ENCODE measurements at regions of chr6 and their contacts with region 1.

Region 1: DNA sequence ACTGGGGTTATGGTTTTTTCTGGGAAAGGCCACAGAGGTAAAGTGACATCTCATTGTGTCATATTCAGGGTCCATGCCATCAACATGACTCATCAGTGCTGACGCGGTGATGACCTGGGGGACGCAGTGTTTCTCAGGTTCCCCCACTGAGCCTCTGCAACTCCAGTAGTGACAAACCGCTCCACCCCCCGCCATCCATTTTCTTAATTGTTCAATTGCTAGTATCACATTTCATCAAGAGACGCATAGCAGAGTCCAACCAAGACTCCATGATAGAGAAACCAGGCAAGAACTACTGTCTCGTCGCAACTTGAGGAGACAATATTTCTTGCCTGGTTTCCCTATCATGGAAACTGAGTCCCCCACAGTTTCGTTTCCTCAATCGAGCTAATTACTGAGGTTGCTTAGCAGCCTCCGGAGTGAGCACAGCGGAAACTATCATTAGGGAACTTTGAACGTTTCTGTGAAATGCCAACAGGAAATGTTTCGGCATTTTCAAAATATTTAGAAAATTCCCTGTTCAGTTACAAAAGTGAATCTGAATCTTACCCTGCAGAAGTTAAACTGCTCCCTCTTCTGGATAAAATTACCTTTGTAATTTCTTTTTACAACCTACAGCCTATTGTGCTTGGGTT is 12.2 kb upstream of the SERPINB1 start:
- DNase-seq: no peak
- H3K4me3 ChIP-seq: peak overlapping the region in 7 of 8 donors; percentile 1 to 57 (median 10)
- H3K27ac ChIP-seq: peak overlapping the region; percentile 71 to 93 (median 90)
- H3K4me1 ChIP-seq: peaks cover 39 to 99% (median 73%) of the 10 kb centered on the region in 6 donors
- H3K27me3 ChIP-seq: no peaks in the 10 kb centered on the region
- CTCF ChIP-seq: peak in 10 of 11 experiments; percentile 13 to 43 (median 28)
- POLR2A ChIP-seq: no peak

Region 2: DNA sequence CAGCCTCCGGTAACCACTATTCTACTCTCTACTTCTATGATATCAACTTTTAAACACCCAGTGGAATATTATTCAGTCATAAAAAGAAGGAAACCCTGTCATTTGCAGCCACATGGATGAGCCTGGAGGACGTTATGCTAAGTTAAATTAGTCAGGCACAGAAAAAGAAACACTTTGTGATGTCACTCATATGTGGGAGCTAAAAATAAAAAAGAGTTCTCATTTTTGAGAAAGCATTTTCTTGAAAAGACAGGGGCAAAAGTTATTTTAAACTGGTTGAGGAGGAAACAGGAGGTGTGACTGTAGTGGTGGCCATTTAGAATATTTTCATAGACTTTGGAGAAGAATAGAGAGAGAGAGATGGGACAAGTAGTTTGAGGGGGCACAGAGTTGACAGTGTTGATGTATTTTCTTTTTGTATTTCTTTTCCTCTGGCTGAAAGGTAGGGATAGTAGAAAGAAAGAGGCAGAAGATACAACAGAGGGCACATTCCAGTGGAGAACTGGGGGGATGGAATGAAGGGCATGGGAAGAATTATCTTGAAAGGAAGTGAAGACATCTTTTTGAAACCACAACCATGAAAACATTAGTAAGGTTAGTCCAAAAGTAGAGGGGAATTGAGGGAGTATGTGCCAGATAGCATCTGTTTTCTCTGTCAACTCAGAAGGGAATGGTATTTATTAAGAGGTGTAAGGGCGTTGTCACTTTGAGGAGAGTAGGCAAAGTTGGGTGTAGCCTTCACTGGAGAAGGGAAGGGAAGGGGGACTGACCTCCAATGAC is 427.1 kb before region 1 on chr6:
- intact Hi-C with region 1: no loop called
- DNase-seq: no peak
- H3K4me3 ChIP-seq: no peak overlapping the region
- H3K27ac ChIP-seq: no peak overlapping the region
- H3K4me1 ChIP-seq: no peaks in the 10 kb centered on the region
- H3K27me3 ChIP-seq: no peaks in the 10 kb centered on the region
- CTCF ChIP-seq: no peak
- POLR2A ChIP-seq: no peak

Region 3: GRCh38 chr6:2688416-2689064 is 165.3 kb before region 1 on chr6:
- intact Hi-C with region 1: no loop called
- DNase-seq: no peak
- H3K4me3 ChIP-seq: no peak overlapping the region
- H3K27ac ChIP-seq: no peak overlapping the region
- H3K4me1 ChIP-seq: no peaks in the 10 kb centered on the region
- H3K27me3 ChIP-seq: no peaks in the 10 kb centered on the region
- CTCF ChIP-seq: no peak
- POLR2A ChIP-seq: no peak

Region 4: DNA sequence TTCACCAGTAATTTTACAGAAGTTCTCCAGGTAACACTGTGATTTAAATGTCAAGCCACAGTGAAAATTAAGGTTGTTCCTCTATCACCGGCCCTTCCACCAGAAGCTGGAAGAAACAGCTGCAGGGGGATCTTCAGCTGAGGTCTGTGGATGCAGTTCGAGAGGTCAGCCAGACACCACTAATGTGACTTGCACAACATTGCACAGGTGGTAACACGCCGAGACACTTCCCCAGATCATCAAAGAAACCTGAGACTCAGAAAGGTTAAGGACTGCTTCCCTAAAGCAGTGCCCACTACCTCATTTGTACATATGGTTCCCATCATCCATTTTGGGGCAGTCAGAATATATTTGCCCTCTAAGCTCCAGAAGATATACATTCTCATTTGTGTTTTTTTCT is 57.3 kb after region 1 on chr6:
- intact Hi-C with region 1: loop called (anchors 10 kb)
- DNase-seq: no peak
- H3K4me3 ChIP-seq: no peak overlapping the region
- H3K27ac ChIP-seq: peak overlapping the region in 4 of 8 donors; percentile 12 to 38 (median 27)
- H3K4me1 ChIP-seq: peaks cover 0 to 39% (median 17%) of the 10 kb centered on the region in 6 donors
- H3K27me3 ChIP-seq: no peaks in the 10 kb centered on the region
- CTCF ChIP-seq: no peak
- POLR2A ChIP-seq: no peak

Region 5: DNA sequence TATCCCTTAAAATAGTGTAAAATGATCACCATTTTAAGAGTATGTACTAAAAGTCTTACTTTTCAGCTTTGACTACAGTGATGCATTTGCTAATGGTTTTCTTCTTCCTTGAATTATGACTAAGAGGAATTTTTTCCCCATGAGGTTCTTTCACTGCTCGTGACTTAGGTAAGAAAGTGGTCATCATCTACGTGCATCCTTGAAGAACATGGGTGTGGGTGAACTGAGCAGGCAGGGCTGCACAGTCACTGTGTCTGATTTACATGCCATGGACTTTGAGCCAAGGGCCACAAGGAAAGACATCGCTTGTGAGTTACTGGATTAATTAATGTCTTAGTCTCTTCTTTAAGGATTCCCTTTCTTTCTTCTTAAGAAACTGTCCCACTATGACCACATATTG is 179.1 kb after region 1 on chr6:
- intact Hi-C with region 1: no loop called
- DNase-seq: no peak
- H3K4me3 ChIP-seq: no peak overlapping the region
- H3K27ac ChIP-seq: no peak overlapping the region
- H3K4me1 ChIP-seq: peaks cover 0 to 15% (median 3%) of the 10 kb centered on the region in 6 donors
- H3K27me3 ChIP-seq: no peaks in the 10 kb centered on the region
- CTCF ChIP-seq: no peak
- POLR2A ChIP-seq: no peak